ENCODE measurements at regions of chr2 and their contacts with region 1.

Region 1: DNA sequence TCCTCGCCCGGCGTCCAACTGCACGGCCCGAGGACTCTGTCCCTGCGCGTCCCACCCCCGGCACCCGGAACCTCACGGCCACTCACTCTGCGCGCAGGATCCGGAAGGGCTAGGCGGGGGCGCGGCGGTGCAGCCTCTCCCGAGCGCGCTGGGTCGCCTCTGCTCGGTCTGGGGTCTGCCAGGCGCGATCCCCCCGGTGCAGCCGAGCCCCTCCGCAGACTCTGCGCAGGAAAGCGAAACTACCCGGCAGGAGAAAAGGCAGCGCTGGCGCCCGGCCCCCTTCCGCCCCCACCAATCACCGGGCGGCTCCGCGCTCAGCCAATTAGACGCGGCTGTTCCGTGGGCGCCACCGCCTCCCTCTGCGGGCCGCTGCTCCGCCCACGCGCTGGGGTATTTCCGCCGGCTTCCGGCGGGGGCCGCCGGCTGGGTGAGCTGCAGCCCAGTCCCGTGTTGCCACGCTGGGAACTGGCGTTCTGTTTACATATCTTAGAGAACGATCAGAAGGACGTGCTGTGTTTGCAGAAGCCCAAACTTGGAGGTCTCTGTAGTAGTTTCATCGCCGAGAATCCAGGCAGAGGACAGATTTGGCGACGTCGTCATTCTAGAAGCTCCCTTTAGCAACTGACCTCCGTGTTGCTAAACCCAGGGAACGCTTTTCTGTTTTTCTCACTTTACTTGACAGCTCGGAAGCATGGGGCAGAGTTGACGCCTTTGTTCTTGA is at the start of gene STAT1:
- DNase-seq: peak; percentile 98
- ATAC-seq: peak; percentile 91
- H3K4me3 Mint-ChIP-seq: no peak within 1 kb of the TSS
- H3K27ac Mint-ChIP-seq: no peak within 1 kb of the TSS
- H3K4me1 Mint-ChIP-seq: peaks cover 29% of the 10 kb centered on the region
- H3K27me3 Mint-ChIP-seq: no peaks in the 10 kb centered on the region
- CTCF ChIP-seq: no peak
- total RNA-seq, gene STAT1: 71.2 and 85.1 TPM in 2 replicates

Region 2: DNA sequence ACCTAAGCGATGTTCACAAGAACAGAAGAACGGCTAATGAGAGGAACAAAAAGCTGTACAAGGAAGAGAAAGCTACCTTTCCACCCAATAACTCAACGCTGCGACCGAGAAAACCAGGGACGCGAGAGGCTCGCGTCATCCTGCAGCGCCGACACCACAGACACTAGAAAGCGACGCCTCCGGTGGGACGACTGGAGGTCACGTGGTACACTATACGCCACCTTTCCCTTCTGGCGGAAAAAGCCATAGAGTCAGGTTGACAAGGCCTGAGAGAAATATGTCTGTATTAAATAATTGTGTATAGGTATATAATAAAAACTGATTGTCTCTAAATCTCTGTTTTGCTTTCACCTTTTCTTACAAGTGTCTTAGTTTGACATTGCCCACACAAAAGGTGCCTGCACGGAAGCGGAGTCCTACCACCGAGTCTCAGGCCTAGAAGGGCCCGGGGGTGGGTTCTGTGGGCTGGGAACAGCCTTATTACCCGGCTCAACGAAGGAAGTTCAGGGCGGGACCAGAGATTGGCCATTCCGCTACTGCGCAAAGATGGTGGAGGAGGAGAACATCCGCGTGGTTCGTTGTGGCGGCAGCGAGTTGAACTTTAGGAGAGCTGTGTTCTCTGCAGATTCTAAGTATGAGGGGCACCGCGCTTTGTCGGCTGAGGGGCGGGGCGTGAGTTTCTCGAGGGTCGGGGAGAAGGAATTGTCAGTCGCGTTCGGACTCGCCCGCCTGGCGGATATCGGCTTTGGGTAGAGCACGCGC is 1573.0 kb before region 1 on chr2 and contains the start of gene WDR75:
- CTCF ChIA-PET with region 1: no interaction called
- POLR2A ChIA-PET with region 1: interaction called, 3 read pairs
- intact Hi-C with region 1: loop called (anchors 1 kb)
- DNase-seq: peak; percentile 79
- ATAC-seq: peak; percentile 94
- H3K4me3 Mint-ChIP-seq: peak within 1 kb of the TSS; percentile 98
- H3K27ac Mint-ChIP-seq: peak within 1 kb of the TSS; percentile 99
- H3K4me1 Mint-ChIP-seq: peaks cover 26% of the 10 kb centered on the region
- H3K27me3 Mint-ChIP-seq: no peaks in the 10 kb centered on the region
- CTCF ChIP-seq: no peak
- total RNA-seq, gene WDR75: 53.0 and 61.2 TPM in 2 replicates

Region 3: GRCh38 chr2:190180313-190181122 is 833.6 kb before region 1 on chr2:
- CTCF ChIA-PET with region 1: no interaction called
- POLR2A ChIA-PET with region 1: no interaction called
- intact Hi-C with region 1: loop called (anchors 10 kb)
- DNase-seq: peak; percentile 54
- ATAC-seq: peak; percentile 86
- H3K4me3 Mint-ChIP-seq: peak overlapping the region; percentile 82
- H3K27ac Mint-ChIP-seq: no peak overlapping the region
- H3K4me1 Mint-ChIP-seq: peaks cover 20% of the 10 kb centered on the region
- H3K27me3 Mint-ChIP-seq: no peaks in the 10 kb centered on the region
- CTCF ChIP-seq: no peak

Region 4: DNA sequence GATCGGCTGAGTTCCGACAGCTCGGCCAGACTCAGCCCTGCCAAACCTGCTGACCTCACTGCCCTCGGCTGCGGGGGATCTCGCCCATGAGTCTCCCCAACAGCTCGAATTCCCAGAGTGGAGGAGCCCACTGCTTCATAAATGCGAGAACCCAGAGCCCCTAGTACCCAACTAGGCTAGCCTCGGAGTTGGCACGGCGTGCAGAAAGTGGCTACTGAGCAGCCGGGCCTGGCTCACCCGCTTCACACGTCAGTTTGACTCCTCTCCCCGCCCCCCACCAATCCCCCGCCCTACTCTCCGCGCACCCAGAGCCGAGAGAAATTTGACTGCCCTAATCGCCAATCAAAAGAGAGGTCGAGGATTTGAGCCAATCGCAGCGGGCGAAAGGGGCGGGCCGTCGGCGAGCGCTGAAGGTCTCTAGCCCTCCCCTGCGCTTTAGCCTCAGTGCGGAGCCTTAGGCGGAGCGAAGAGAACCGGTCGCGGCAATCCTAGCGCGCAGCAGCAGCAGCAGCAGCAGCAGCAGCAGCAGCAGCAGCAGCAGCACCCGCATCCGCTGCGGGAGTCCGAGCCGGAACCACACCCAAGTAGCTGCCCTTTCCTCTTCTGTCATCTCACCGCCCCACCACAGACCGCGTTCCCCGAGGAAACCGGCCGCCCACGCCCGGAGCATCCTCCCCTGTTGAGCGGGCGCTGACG is 133.6 kb before region 1 on chr2 and contains the start of gene GLS:
- CTCF ChIA-PET with region 1: no interaction called
- POLR2A ChIA-PET with region 1: interaction called, 31 read pairs
- intact Hi-C with region 1: loop called (anchors 1 kb)
- DNase-seq: peak; percentile 90
- ATAC-seq: peak; percentile 82
- H3K4me3 Mint-ChIP-seq: peak within 1 kb of the TSS; percentile 97
- H3K27ac Mint-ChIP-seq: peak within 1 kb of the TSS; percentile 97
- H3K4me1 Mint-ChIP-seq: peaks cover 44% of the 10 kb centered on the region
- H3K27me3 Mint-ChIP-seq: no peaks in the 10 kb centered on the region
- CTCF ChIP-seq: no peak
- total RNA-seq, gene GLS: 212 and 255 TPM in 2 replicates

Region 5: GRCh38 chr2:191030521-191031154 is 16.5 kb after region 1 on chr2:
- CTCF ChIA-PET with region 1: interaction called, 4 read pairs
- POLR2A ChIA-PET with region 1: interaction called, 3 read pairs
- intact Hi-C with region 1: loop called (anchors 1 kb)
- DNase-seq: no peak
- ATAC-seq: peak; percentile 88
- H3K4me3 Mint-ChIP-seq: no peak overlapping the region
- H3K27ac Mint-ChIP-seq: no peak overlapping the region
- H3K4me1 Mint-ChIP-seq: peaks cover 6% of the 10 kb centered on the region
- H3K27me3 Mint-ChIP-seq: no peaks in the 10 kb centered on the region
- CTCF ChIP-seq: no peak

Region 6: DNA sequence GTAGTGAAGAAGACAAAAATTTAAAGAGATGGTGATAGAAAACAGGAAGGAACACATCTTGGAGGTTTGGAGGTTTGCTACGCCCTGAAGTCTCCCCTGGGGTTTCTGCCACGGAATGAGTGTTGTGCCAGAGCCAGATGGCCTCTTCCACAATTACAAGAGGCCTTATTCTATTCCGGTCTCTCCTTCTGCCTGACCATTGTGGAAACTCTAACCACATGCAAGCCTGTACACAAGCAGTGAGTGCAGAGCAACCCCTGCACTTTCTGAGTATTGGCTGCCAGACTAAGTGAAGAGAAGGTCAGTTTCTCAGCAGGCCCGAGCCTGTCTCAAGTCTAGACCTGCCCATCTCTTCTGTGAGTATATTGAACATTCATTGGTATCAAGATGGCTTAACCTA is 208.4 kb after region 1 on chr2:
- CTCF ChIA-PET with region 1: no interaction called
- POLR2A ChIA-PET with region 1: no interaction called
- intact Hi-C with region 1: no loop called
- DNase-seq: no peak
- ATAC-seq: peak; percentile 14
- H3K4me3 Mint-ChIP-seq: no peak overlapping the region
- H3K27ac Mint-ChIP-seq: no peak overlapping the region
- H3K4me1 Mint-ChIP-seq: peaks cover 10% of the 10 kb centered on the region
- H3K27me3 Mint-ChIP-seq: no peaks in the 10 kb centered on the region
- CTCF ChIP-seq: no peak